PC-3 (cell line): ENCODE measurements at regions of chr11 and their contacts with region 1.

Region 1: GRCh38 chr11:17063171-17064002 is 14.1 kb downstream of the RPS13 start:
- DNase-seq: peak; percentile 73
- ATAC-seq: peak; percentile 100
- H3K4me3 ChIP-seq: no peak overlapping the region
- H3K27ac ChIP-seq: no peak overlapping the region
- H3K4me1 ChIP-seq: no peaks in the 10 kb centered on the region
- H3K27me3 ChIP-seq: no peaks in the 10 kb centered on the region
- CTCF ChIP-seq: peak; percentile 92

Region 2: GRCh38 chr11:16785520-16786128 is 277.8 kb before region 1 on chr11:
- CTCF ChIA-PET with region 1: no interaction called
- POLR2A ChIA-PET with region 1: no interaction called
- intact Hi-C with region 1: loop called (anchors 5 kb)
- DNase-seq: peak; percentile 71
- ATAC-seq: peak; percentile 39
- H3K4me3 ChIP-seq: no peak overlapping the region
- H3K27ac ChIP-seq: no peak overlapping the region
- H3K4me1 ChIP-seq: peaks cover 37% of the 10 kb centered on the region
- H3K27me3 ChIP-seq: no peaks in the 10 kb centered on the region
- CTCF ChIP-seq: peak; percentile 83

Region 3: DNA sequence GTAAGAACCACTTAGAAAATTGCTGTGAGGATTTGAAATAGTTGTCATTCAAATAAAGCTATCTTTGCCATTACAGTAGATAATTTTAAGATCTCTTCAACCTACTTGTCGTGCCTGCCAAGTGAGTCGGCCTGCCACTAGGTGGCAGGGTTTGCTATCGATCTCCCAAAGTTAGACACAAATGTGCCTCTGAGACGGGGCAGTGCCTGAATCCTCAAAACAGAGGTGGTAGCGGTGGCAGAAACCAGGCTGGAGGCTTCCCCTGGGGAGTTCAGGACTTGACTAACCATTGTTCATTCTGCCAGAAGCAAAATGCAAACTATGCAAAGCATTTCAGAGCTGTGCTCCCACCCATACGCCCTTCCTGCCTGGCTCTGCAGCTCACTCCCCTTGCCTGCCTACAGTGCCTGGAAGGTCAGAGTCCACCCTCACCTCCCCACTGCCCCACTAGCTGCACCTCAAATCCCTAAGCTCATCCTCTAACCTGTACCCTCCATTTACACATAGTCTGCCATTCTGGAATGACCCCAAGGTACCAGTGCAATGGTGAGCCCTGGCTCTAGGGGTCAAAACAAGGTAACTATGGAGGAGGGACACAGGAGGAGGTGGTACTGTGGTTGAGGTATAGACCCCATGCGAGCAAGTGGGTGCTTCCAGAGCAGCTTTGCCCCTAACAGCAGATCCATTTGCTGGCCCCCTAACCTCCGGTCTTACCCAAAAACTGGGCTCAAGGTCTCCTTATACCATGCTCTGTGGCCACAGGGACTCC is 242.9 kb before region 1 on chr11:
- CTCF ChIA-PET with region 1: no interaction called
- POLR2A ChIA-PET with region 1: no interaction called
- intact Hi-C with region 1: loop called (anchors 5 kb)
- DNase-seq: peak; percentile 86
- ATAC-seq: peak; percentile 77
- H3K4me3 ChIP-seq: no peak overlapping the region
- H3K27ac ChIP-seq: no peak overlapping the region
- H3K4me1 ChIP-seq: peaks cover 29% of the 10 kb centered on the region
- H3K27me3 ChIP-seq: no peaks in the 10 kb centered on the region
- CTCF ChIP-seq: peak; percentile 93

Region 4: DNA sequence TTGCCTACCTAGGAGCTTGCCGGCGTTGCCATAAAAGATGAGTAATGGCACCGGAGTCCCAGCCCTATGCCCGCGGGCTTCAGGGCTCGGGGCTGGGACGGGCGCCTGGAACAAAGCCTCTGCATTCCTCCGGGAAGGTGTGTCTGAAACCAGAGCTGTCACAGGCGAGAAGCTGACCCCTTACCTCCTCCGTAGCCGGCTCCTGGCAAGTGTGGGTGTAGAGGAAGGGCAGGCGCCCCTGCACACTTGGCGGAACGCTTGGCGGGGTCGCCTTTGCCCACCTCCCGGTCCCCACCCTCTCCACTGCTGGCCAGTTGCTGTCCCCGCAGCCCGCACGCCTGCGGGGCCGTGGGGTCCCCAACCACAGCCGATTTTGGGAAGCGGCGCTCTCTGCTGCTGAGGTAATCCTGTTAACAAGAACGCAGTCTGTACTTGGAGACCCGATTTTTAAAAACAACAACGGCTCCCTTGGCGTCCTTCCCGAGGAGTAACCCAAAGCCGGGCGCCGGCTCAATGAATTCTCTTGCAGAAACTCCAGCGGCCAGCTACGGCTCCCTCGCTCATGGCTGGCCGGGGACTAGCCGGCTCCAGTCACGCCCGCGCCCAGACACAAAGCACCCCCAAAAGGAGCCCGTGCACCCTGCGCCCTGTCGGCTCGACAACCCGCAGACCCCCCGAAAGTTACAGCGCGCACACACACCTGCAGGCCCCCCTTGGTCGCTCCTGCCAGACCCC is 138.4 kb before region 1 on chr11:
- CTCF ChIA-PET with region 1: interaction called, 14 read pairs
- POLR2A ChIA-PET with region 1: no interaction called
- intact Hi-C with region 1: no loop called
- DNase-seq: peak; percentile 96
- ATAC-seq: peak; percentile 86
- H3K4me3 ChIP-seq: peak overlapping the region; percentile 89
- H3K27ac ChIP-seq: peak overlapping the region; percentile 69
- H3K4me1 ChIP-seq: peaks cover 31% of the 10 kb centered on the region
- H3K27me3 ChIP-seq: no peaks in the 10 kb centered on the region
- CTCF ChIP-seq: no peak

Region 5: GRCh38 chr11:16945671-16946469 is 117.5 kb before region 1 on chr11:
- CTCF ChIA-PET with region 1: interaction called, 14 read pairs
- POLR2A ChIA-PET with region 1: no interaction called
- intact Hi-C with region 1: loop called (anchors 1 kb)
- DNase-seq: peak; percentile 78
- ATAC-seq: peak; percentile 99
- H3K4me3 ChIP-seq: no peak overlapping the region
- H3K27ac ChIP-seq: no peak overlapping the region
- H3K4me1 ChIP-seq: no peaks in the 10 kb centered on the region
- H3K27me3 ChIP-seq: no peaks in the 10 kb centered on the region
- CTCF ChIP-seq: peak; percentile 88

Region 6: DNA sequence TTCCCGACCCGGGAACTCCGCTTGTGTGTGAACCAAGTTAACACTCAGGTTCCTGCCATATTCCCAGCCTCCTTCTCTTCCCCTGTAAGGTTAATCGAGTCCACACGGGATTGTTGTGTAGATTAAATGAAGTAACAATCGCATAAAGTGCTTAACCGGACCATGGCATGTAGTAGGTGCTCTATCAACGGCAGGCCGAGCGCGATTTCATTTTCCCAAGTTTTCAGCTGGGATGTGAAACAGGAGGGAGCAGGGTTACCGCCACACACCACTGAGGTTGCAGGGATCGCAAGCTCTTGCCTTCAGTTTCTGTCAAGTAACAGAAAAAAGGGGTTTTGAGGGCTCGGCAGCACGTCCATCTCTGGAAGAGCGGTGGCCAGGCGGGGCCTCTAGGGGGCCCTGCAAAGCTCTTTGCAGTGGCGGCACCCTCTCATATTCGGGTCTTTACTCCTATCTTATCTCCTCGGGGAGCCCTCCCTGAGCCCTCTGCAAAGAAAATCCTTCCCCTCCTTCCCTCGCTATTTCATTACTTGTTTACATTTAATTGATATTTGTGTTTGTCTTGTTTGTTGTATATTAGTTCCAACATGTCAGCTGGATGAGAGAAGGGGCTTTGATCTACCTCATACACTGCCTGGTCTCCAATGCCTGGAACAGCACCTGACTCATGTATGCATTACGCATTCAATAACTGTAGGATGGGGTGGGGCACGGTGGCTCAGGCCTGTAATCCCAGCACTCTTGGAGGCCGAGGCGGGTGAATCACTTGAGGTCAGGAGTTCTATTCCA is 48.4 kb before region 1 on chr11:
- CTCF ChIA-PET with region 1: interaction called, 3 read pairs
- POLR2A ChIA-PET with region 1: no interaction called
- intact Hi-C with region 1: loop called (anchors 2 kb)
- DNase-seq: peak; percentile 83
- ATAC-seq: peak; percentile 39
- H3K4me3 ChIP-seq: peak overlapping the region; percentile 73
- H3K27ac ChIP-seq: peak overlapping the region; percentile 42
- H3K4me1 ChIP-seq: peaks cover 30% of the 10 kb centered on the region
- H3K27me3 ChIP-seq: no peaks in the 10 kb centered on the region
- CTCF ChIP-seq: peak; percentile 76